ENCODE measurements at regions of chr2 and their contacts with region 1.

Region 1: GRCh38 chr2:53786705-53787612 is at the starts of genes ASB3 and ERLEC1:
- DNase-seq: peak; percentile 82
- ATAC-seq: peak; percentile 93
- H3K4me3 Mint-ChIP-seq: peak within 1 kb of the TSS; percentile 91
- H3K27ac Mint-ChIP-seq: peak within 1 kb of the TSS; percentile 94
- H3K4me1 Mint-ChIP-seq: peaks cover 50% of the 10 kb centered on the region
- H3K27me3 Mint-ChIP-seq: no peaks in the 10 kb centered on the region
- CTCF ChIP-seq: no peak
- total RNA-seq, gene ASB3: 16.3 and 22.8 TPM in 2 replicates
- total RNA-seq, gene ERLEC1: 16.8 and 18.2 TPM in 2 replicates

Region 2: GRCh38 chr2:55693181-55694134 is 1906.5 kb after region 1 on chr2 and contains the start of gene PNPT1:
- CTCF ChIA-PET with region 1: no interaction called
- POLR2A ChIA-PET with region 1: no interaction called
- intact Hi-C with region 1: loop called (anchors 5 kb)
- DNase-seq: peak; percentile 87
- ATAC-seq: peak; percentile 100
- H3K4me3 Mint-ChIP-seq: peak within 1 kb of the TSS; percentile 96
- H3K27ac Mint-ChIP-seq: peak within 1 kb of the TSS; percentile 79
- H3K4me1 Mint-ChIP-seq: peaks cover 30% of the 10 kb centered on the region
- H3K27me3 Mint-ChIP-seq: no peaks in the 10 kb centered on the region
- CTCF ChIP-seq: no peak
- total RNA-seq, gene PNPT1: 26.6 and 35.8 TPM in 2 replicates

Measured in activated B cell treated with CpG ODN at 0.5 μM for 24 hours (primary cell).